ENCODE measurements at regions of chr15 and their contacts with region 1.

Region 1: DNA sequence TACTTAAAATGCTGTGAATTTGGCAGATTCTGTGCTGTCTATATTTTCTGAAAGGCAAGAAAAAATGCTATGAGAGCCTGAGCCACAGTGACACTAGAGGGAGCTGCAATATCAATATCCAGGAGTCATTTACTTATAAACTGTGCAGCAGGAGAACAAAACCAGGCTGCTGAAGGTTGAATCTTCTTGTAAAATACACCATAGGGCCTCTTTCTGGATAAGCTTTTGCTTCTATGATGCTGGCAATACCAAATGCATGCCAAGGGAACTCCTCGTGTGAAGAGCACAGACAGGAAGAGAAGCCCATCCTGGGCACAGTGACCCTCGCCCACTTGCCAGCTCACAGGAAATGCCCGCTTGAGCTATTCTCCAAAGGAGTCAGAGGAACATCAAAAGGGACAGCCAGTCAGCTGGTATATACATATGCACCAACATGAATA is 48.0 kb upstream of the TSPAN3 start:
- DNase-seq: no peak
- H3K4me3 ChIP-seq: no peak overlapping the region
- CTCF ChIP-seq: peak; percentile 56

Region 2: GRCh38 chr15:76994971-76995945 is 123.6 kb before region 1 on chr15 and contains the start of gene PSTPIP1:
- CTCF ChIA-PET with region 1: no interaction called
- POLR2A ChIA-PET with region 1: no interaction called
- DNase-seq: no peak
- H3K4me3 ChIP-seq: no peak within 1 kb of the TSS
- CTCF ChIP-seq: no peak

Region 3: DNA sequence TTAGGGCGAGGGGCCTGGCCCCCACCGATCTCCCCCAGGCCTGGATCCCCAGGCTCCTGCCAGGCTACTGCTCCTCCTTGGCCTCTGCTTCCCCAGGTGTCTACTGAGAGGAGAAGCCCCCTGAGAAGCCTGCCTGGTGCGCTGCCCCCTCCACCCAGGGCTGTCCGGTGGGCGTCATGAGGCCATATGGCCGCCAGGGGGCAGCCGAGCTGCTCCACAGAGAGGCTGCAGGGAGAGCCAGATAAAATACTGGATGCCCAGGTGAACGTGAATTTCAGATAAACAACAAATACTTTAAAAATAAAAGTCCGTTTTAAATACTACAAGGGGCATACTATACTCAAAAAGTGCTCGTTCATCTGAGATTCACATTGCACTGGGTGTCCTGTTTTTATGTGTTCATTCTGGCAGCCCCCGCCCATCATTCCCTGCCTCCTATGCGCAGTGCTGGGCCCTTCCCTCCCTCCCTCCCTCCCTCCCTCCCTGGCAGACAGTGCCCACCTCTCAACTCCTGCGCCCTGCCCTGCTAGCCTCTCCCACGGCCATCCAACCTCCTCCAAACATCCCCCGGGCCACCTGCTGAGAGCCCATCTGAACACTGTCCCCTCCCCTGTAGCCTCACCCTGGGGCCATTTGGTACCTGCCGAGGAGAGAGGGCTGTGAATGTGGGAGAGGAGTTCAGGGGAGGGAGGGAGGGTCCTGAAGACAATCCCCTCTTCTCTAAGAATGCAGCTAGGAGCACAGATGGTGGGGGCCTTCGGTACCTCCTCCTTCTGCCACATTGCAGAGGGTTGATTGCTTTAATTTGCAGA is 94.4 kb before region 1 on chr15:
- CTCF ChIA-PET with region 1: interaction called, 10 read pairs
- POLR2A ChIA-PET with region 1: no interaction called
- DNase-seq: no peak
- H3K4me3 ChIP-seq: no peak overlapping the region
- CTCF ChIP-seq: peak; percentile 91

Region 4: DNA sequence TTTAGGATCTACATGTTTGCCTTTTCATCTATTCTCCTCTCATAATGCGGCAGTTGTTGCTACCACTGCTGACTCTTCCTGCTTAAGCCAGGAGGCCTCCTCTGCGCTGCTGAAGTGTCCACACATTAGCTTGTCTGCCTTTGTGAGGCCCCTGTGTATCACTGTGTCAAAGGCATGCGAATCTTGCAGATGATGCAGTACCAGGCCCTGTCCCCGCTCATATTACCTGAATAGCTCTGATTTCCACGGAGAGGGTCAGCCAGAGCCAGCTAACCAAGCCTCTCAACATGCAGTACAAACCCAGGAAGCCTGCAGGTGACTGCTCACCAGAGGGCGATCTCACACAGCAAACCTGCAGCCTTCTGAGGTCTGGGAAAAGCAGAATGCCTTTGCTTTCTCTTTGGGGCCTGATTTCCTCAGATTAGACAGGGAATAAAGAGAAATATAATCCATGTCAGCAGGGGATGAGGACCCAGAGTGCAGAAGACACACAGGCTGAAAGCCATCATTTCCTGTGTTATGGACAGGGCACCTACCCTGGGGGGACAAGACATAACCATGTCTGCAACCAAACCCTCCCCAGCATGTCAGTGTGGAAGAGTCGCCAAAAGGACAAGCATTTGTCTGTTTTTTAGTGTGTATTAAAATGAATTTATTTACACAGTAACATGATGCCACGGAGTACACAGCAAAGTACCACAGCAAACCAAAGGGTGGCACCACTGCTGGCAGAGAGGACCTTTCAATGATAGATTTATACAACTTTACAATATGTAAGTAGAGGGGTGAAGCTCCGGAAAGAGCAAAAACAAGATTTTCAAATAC is 11.2 kb before region 1 on chr15:
- CTCF ChIA-PET with region 1: interaction called, 52 read pairs
- POLR2A ChIA-PET with region 1: no interaction called
- DNase-seq: no peak
- H3K4me3 ChIP-seq: no peak overlapping the region
- CTCF ChIP-seq: peak; percentile 82

Region 5: DNA sequence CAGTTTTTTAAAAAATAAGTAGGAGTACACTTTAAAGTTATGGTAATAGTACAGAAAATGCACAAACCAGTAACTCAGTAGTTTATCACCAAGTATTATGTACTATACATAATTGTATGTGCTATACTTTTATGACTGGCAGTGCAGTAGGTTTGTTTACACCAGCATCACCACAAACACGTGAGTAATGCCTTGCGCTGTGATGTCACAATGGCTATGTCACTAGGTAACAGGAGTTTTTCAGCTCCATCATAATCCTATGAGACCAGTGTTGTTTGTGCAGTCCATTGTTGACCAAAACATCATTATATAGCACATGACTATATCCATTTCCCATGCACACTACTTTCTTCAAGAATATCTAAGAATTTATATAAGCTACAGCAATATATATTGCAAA is 20.4 kb after region 1 on chr15:
- CTCF ChIA-PET with region 1: interaction called, 11 read pairs
- POLR2A ChIA-PET with region 1: interaction called, 6 read pairs
- DNase-seq: no peak
- H3K4me3 ChIP-seq: no peak overlapping the region
- CTCF ChIP-seq: no peak

Region 6: DNA sequence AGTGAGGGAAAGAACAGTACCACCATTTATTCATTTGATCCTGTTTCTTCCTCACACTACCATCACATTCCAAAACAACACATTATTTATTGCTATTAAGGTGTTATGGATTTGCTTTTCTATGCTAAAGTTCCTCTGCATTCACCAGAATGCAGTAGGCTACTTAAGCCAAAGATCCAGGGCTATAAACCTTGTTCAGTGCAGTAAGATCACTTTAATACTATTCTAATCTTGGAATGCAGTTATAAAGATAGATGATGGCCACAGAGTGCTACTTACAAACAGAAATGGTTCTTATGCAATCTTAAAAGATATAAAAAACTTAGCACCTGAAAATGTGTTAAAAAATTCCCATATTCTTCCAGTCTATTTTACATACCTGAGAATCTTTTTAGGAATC is 59.5 kb after region 1 on chr15:
- CTCF ChIA-PET with region 1: interaction called, 12 read pairs
- POLR2A ChIA-PET with region 1: interaction called, 3 read pairs
- DNase-seq: no peak
- H3K4me3 ChIP-seq: no peak overlapping the region
- CTCF ChIP-seq: no peak

Region 7: GRCh38 chr15:77186594-77187011 is 67.7 kb after region 1 on chr15:
- CTCF ChIA-PET with region 1: interaction called, 16 read pairs
- POLR2A ChIA-PET with region 1: interaction called, 3 read pairs
- DNase-seq: no peak
- H3K4me3 ChIP-seq: no peak overlapping the region
- CTCF ChIP-seq: peak; percentile 32

Region 8: GRCh38 chr15:77496710-77497103 is 377.8 kb after region 1 on chr15:
- CTCF ChIA-PET with region 1: interaction called, 42 read pairs
- POLR2A ChIA-PET with region 1: no interaction called
- DNase-seq: peak; percentile 95
- H3K4me3 ChIP-seq: peak overlapping the region; percentile 19; the same call in 1 of the 2 replicates
- CTCF ChIP-seq: peak; percentile 93